ENCODE measurements at regions of chr10 and their contacts with region 1.

Region 1: DNA sequence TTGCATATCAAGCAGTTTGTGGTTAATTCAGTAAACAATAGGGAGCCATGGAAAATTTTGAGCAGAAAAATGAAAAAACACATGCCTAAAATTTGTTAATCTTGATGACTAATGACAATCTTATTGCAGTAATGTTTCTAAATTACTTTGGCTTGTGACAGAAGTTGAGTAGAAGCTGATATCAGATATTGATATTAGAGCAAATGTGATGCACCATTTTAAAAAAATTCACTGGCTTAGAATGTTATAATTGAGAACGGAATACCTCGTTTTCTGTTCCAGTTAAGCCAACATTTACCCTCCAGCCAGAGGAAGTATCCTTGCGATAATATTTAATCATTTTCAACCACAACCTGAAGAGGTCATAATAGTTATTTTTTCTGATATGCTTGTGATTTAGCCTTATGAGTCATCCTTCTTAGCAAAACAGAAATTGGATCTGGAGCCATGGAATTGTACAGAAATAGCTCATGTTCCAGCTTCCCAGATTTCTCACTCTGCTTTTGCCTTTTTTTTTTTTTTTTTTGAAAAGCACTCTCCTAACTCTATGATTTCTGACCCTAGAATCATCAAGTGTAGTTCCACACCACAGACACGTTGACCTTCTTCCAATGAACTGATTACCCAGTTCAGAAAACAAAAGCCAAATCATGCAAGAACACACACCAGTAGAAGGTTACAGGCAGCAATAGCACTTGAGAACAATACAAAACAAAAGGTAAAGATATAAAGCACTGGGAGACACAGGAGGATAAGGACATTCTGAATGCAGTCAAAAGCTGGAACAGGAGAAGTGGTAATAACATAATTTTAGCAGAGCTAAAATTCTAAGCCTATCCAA is 96.8 kb upstream of the PHYHIPL start:
- DNase-seq: no peak
- H3K4me3 Mint-ChIP-seq: no peak overlapping the region
- H3K27ac Mint-ChIP-seq: no peak overlapping the region
- H3K4me1 Mint-ChIP-seq: peaks cover 26% of the 10 kb centered on the region
- H3K27me3 Mint-ChIP-seq: peaks cover 43% of the 10 kb centered on the region
- CTCF ChIP-seq: no peak

Region 2: GRCh38 chr10:59108886-59109288 is 29.3 kb after region 1 on chr10:
- CTCF ChIA-PET with region 1: no interaction called
- intact Hi-C with region 1: loop called (anchors 2 kb)
- DNase-seq: peak; percentile 15
- H3K4me3 Mint-ChIP-seq: no peak overlapping the region
- H3K27ac Mint-ChIP-seq: peak overlapping the region; percentile 64
- H3K4me1 Mint-ChIP-seq: peaks cover 24% of the 10 kb centered on the region
- H3K27me3 Mint-ChIP-seq: no peaks in the 10 kb centered on the region
- CTCF ChIP-seq: no peak

Measured in Calu3 (cell line).